CD4-positive, alpha-beta memory T cell (primary cell): ENCODE measurements at regions of chr20 and their contacts with region 1.

Region 1: GRCh38 chr20:38057351-38057972 is 23.9 kb downstream of the RPRD1B start:
- DNase-seq: peak; percentile 63 to 74 (median 66)
- H3K4me3 ChIP-seq: no peak overlapping the region
- H3K4me3 Mint-ChIP-seq: peak overlapping the region in 1 of 8 donors; percentile 38
- H3K27ac ChIP-seq: no peak overlapping the region
- H3K27ac Mint-ChIP-seq: peak overlapping the region in 5 of 7 donors; percentile 19 to 72 (median 32)
- H3K4me1 ChIP-seq: no peaks in the 10 kb centered on the region
- H3K4me1 Mint-ChIP-seq: peaks cover 12 to 26% (median 25%) of the 10 kb centered on the region in 4 donors
- H3K27me3 ChIP-seq: no peaks in the 10 kb centered on the region
- H3K27me3 Mint-ChIP-seq: no peaks in the 10 kb centered on the region

Region 2: DNA sequence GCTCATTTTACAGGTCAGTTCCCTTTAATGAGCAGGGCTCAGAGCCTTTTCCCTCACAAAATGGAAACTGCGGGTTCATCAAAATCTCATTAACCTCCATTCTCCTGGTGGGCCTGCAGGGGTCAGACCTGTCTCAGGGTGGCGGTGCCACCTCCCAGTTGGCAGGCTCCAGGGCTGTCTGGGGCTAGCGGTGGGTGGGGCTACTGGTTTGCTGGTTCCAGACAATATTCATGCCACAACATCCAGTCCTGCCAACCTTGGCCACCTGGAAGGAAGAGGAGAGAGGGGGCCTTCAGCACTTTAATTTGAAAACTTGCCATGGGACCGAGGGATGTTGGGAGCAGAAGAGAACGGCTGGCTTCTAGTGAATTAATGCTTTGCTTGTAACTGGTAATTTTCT is 405.5 kb before region 1 on chr20:
- CTCF ChIA-PET with region 1: no interaction called
- POLR2A ChIA-PET with region 1: no interaction called
- intact Hi-C with region 1: no loop called
- DNase-seq: peak in 1 of 5 donors; percentile 2
- H3K4me3 ChIP-seq: no peak overlapping the region
- H3K4me3 Mint-ChIP-seq: no peak overlapping the region
- H3K27ac ChIP-seq: no peak overlapping the region
- H3K27ac Mint-ChIP-seq: no peak overlapping the region
- H3K4me1 ChIP-seq: no peaks in the 10 kb centered on the region
- H3K4me1 Mint-ChIP-seq: no peaks in the 10 kb centered on the region
- H3K27me3 ChIP-seq: no peaks in the 10 kb centered on the region
- H3K27me3 Mint-ChIP-seq: peaks cover 12 to 26% of the 10 kb centered on the region in 2 donors

Region 3: DNA sequence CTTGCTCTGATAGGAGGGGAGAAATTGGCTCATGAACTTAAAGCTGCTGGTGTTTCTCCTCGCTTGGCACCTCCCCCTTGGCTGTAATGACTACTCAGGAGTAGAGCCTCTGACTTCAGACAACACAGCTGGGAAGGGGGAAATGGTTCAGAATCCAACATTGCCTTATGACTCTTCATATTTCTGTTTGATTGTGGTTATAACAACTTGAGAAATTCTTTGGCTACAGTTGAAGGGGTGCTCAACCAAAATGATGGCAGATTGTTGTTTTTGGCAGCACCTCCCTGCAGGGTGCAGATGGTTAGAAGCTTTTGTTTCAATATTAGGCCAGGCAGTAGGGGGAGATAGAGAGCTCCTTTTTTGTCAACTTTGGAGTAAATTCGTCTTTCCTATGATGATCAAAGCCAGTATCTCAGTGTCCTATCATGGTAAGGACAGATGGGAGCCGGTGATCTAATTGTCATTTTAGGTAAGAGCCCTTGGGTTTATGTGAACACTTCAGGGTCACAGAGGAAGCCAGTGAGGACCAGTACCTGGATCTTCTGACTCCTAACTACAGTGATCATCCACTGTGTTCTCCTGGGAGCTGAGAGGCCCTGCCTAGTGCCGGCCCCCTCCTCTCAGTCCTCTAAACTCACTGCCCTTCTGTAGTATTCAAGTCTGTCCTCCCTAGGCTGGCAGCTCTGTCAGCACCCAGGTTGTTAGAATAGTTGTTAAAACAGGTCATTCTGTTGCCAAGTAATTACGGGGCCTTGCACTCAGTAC is 16.0 kb after region 1 on chr20:
- CTCF ChIA-PET with region 1: interaction called, 17 read pairs
- POLR2A ChIA-PET with region 1: no interaction called
- intact Hi-C with region 1: no loop called
- DNase-seq: peak; percentile 17 to 39 (median 33)
- H3K4me3 ChIP-seq: no peak overlapping the region
- H3K4me3 Mint-ChIP-seq: no peak overlapping the region
- H3K27ac ChIP-seq: no peak overlapping the region
- H3K27ac Mint-ChIP-seq: peak overlapping the region in 6 of 7 donors; percentile 7 to 64 (median 37)
- H3K4me1 ChIP-seq: no peaks in the 10 kb centered on the region
- H3K4me1 Mint-ChIP-seq: peaks cover 14 to 23% (median 20%) of the 10 kb centered on the region in 4 donors
- H3K27me3 ChIP-seq: no peaks in the 10 kb centered on the region
- H3K27me3 Mint-ChIP-seq: no peaks in the 10 kb centered on the region

Region 4: DNA sequence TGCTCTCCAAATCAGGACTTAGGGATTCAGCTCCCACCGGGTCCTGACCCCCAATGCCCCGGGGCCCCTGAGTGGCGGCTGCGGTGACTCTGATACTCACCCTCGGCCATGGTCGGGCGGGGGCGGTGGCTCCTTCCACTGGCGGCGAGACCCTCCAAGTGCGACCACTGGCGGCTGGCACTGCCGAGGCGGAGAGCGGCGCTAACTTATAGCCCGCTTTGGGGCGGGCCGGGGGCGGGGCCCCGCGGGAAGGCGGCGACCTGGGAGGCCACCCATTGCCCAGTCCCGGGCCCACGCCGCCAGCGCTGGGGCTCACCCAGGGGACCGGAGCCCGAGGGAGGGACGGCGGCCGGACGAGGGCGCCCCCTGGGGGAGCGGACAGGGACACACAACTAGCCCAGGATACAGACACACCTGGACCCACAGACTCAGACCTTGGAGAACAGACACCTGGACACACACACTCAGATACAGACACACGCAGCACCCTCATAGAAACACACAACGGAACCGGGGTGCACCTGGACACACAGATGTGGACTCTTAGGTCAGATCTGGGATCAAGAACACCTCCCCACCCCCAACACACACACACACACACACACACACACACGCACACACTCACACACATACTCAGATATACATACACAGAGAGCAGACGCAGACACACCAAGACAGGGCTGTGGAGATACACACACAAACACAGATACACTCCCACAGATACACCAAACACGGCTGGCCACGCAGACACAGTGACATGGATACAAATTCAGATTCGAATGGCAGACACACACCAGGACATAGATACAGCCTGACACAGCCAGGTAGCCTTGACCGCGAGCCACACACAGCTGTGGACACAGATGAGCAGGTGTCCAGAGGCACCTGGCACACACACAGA is 107.9 kb after region 1 on chr20 and contains the start of gene TGM2:
- CTCF ChIA-PET with region 1: interaction called, 7 read pairs
- POLR2A ChIA-PET with region 1: no interaction called
- intact Hi-C with region 1: loop called (anchors 1 kb)
- DNase-seq: peak in 4 of 5 donors; percentile 16 to 30 (median 24)
- H3K4me3 ChIP-seq: no peak within 1 kb of the TSS
- H3K4me3 Mint-ChIP-seq: peak within 1 kb of the TSS in 3 of 8 donors; percentile 34 to 46 (median 40)
- H3K27ac ChIP-seq: no peak within 1 kb of the TSS
- H3K27ac Mint-ChIP-seq: peak within 1 kb of the TSS in 2 of 7 donors; percentile 48 to 81
- H3K4me1 ChIP-seq: no peaks in the 10 kb centered on the region
- H3K4me1 Mint-ChIP-seq: peaks cover 3 to 9% (median 6%) of the 10 kb centered on the region in 4 donors
- H3K27me3 ChIP-seq: no peaks in the 10 kb centered on the region
- H3K27me3 Mint-ChIP-seq: peaks cover 5 to 13% of the 10 kb centered on the region in 2 donors
- total RNA-seq, gene TGM2: 0.50 to 0.67 TPM

Region 5: DNA sequence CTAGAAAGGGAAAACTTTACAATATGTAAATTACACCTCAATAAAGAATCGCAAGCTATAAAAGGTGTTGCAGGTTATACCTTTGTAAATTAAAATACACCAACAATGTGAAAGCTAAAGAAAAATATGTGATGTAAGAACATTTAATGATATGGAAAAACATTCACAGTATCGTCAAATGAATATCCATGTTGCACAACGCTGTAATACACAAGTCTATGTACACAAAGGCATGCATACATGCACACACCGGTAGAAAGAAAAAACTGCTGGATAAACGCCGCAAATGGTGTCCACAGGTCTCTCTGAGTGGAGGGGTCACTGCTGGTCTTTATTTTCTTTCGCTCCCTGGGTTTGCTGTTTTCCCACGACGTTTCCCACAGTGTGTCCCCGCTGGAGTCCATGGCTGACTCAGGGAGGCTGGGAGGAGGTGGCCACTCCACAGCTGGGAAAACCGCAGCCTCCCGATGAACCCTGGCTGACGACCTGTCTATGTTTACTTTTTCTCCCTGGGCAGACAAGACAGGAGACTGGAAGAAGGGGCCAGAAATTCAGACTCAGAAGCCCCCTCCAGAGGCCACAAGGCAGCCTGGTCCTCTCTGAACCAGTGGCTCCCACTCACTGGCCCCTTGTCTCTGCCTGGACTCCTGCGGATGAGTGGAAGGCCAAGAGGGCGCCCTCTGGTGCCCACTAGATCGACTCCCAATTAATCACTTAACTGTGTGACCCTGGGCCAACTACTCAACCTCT is 233.5 kb after region 1 on chr20:
- CTCF ChIA-PET with region 1: no interaction called
- POLR2A ChIA-PET with region 1: no interaction called
- intact Hi-C with region 1: no loop called
- DNase-seq: no peak
- H3K4me3 ChIP-seq: no peak overlapping the region
- H3K4me3 Mint-ChIP-seq: no peak overlapping the region
- H3K27ac ChIP-seq: no peak overlapping the region
- H3K27ac Mint-ChIP-seq: no peak overlapping the region
- H3K4me1 ChIP-seq: no peaks in the 10 kb centered on the region
- H3K4me1 Mint-ChIP-seq: peaks cover 0 to 2% (median 0%) of the 10 kb centered on the region in 4 donors
- H3K27me3 ChIP-seq: no peaks in the 10 kb centered on the region
- H3K27me3 Mint-ChIP-seq: peaks cover 11 to 36% of the 10 kb centered on the region in 2 donors

Region 6: DNA sequence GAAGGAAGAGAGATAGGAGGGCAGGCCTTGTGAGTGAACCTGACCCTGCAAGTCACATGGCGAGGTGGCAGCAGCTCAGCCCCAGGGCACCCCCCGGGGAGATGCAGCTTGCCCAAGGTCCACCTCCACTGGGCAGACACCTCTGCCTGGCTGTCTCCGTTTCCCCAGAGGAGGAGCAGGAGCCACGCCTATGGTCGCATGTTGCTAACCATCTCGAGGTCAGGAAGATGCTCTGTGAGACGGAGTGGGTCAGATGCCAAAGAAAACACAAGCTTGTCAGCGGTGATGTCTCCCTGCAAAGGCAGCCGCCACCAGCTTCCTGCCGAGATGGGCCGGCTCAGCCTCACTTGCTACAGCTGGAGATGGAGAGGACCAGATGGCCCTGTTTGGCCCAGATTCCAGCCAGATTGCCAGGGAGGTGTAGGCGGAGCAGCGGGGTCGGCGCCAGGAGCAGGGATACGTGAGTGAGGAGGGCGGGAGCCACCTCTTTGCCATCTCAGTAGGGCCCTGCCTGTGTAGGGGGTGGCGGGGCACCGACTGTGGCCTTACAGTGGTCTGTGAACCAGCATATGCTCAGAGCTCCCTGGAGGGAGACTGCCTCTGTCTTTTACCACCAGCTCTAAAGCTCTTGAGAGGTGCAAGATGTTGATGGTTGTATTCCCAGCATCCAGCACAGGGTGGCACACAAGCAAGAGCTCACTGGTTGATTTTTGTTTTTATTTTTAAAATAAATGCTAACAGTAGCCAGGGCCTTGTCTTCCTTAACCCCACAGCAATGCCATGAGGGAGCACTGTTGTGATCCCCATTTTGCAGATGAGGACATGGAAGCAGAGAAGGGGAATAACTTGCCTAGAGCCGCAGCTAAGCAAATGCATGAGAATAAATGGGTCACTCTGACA is 825.9 kb after region 1 on chr20:
- CTCF ChIA-PET with region 1: no interaction called
- POLR2A ChIA-PET with region 1: no interaction called
- intact Hi-C with region 1: no loop called
- DNase-seq: no peak
- H3K4me3 ChIP-seq: no peak overlapping the region
- H3K4me3 Mint-ChIP-seq: peak overlapping the region in 5 of 8 donors; percentile 19 to 66 (median 55)
- H3K27ac ChIP-seq: peak overlapping the region; percentile 13
- H3K27ac Mint-ChIP-seq: peak overlapping the region; percentile 75 to 91 (median 85)
- H3K4me1 ChIP-seq: peaks cover 47% of the 10 kb centered on the region
- H3K4me1 Mint-ChIP-seq: peaks cover 36 to 69% (median 54%) of the 10 kb centered on the region in 4 donors
- H3K27me3 ChIP-seq: no peaks in the 10 kb centered on the region
- H3K27me3 Mint-ChIP-seq: no peaks in the 10 kb centered on the region